Natural killer cell (primary cell): ENCODE measurements at regions of chr6 and their contacts with region 1.

Region 1: GRCh38 chr6:30616811-30617564 is at the start of gene PPP1R10:
- DNase-seq: peak; percentile 93 to 100
- ATAC-seq: peak; percentile 75 to 91 (median 80)
- H3K4me3 ChIP-seq: peak within 1 kb of the TSS; percentile 73
- H3K4me3 Mint-ChIP-seq: peak within 1 kb of the TSS; percentile 100
- H3K27ac ChIP-seq: peak within 1 kb of the TSS; percentile 99
- H3K27ac Mint-ChIP-seq: peak within 1 kb of the TSS; percentile 96 to 100
- H3K4me1 ChIP-seq: peaks cover 23% of the 10 kb centered on the region
- H3K4me1 Mint-ChIP-seq: peaks cover 57 to 64% of the 10 kb centered on the region in 2 donors
- H3K27me3 ChIP-seq: no peaks in the 10 kb centered on the region
- H3K27me3 Mint-ChIP-seq: peaks cover 0 to 5% of the 10 kb centered on the region in 2 donors
- CTCF ChIP-seq: no peak
- total RNA-seq, gene PPP1R10: 151 to 222 (median 174) TPM

Region 2: DNA sequence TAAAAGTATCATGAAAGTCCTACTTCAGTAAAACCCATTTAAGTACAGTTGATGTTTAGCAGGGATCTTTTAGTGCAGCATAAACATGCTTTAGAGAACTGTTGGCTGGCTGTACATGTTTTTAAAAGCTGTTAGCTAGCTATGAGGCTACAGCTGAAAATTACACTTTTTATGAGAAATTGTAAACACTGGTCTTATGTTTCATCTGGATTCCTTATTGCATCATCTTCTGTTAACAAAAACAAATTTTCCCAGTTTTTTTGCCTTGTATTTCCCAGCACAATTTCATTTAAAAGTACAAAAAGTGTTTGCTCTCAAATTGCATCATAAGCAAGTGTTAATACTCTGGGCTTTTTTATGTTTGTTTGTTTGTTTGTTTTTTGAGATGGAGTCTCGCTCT is 146.0 kb before region 1 on chr6:
- intact Hi-C with region 1: no loop called
- DNase-seq: no peak
- ATAC-seq: no peak
- H3K4me3 ChIP-seq: no peak overlapping the region
- H3K4me3 Mint-ChIP-seq: no peak overlapping the region
- H3K27ac ChIP-seq: no peak overlapping the region
- H3K27ac Mint-ChIP-seq: no peak overlapping the region
- H3K4me1 ChIP-seq: peaks cover 15% of the 10 kb centered on the region
- H3K4me1 Mint-ChIP-seq: peaks cover 12% of the 10 kb centered on the region in 2 donors
- H3K27me3 ChIP-seq: peaks cover 56% of the 10 kb centered on the region
- H3K27me3 Mint-ChIP-seq: peaks cover 59 to 82% of the 10 kb centered on the region in 2 donors
- CTCF ChIP-seq: no peak

Region 3: GRCh38 chr6:30483677-30484279 is 133.2 kb before region 1 on chr6:
- intact Hi-C with region 1: loop called (anchors 5 kb)
- DNase-seq: peak in 1 of 2 donors; percentile 79
- ATAC-seq: peak in 1 of 3 donors; percentile 27
- H3K4me3 ChIP-seq: no peak overlapping the region
- H3K4me3 Mint-ChIP-seq: no peak overlapping the region
- H3K27ac ChIP-seq: no peak overlapping the region
- H3K27ac Mint-ChIP-seq: no peak overlapping the region
- H3K4me1 ChIP-seq: peaks cover 25% of the 10 kb centered on the region
- H3K4me1 Mint-ChIP-seq: peaks cover 13 to 20% of the 10 kb centered on the region in 2 donors
- H3K27me3 ChIP-seq: peaks cover 35% of the 10 kb centered on the region
- H3K27me3 Mint-ChIP-seq: peaks cover 32 to 37% of the 10 kb centered on the region in 2 donors
- CTCF ChIP-seq: peak; percentile 76

Region 4: DNA sequence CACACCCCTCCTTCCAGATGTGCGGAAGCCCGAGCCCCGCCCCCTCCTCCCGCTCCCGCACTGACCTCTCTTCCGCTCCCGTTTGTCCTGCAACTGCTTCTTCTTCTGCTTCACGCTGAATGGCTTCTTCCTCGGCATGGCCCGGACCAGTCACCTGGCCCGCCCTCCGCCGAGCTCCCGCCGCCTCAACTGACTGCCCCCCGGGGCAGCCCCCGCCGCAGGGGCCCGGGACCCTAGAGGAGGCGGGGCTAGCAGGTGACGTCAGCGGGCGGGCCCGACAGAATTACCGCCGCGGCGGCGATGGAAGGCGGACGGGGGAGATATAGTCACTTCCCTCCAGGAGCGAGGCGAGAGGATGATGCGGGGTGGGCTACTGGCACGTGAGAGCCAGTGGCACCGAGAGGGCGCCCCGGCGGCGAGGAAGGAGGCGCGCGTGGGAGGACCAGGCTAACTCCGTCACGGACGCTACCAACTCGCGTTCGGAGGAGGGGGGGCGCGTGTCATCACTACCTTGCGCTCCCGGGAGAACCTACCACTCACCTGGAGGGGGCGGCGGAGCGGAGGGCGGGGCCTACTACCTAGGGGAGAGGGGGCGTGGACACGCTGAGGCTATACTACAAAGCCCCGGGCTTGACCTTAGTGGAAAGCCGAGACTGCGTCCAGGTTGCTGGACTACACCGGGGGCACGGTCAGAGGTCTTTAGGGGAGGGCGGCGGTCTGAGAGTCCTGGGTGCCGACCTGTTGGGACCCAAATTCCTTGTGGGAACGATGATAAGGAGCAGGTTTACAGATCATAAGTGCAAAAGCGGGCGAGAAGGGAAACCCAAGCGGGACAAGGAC is 60.7 kb before region 1 on chr6 and contains the start of gene GNL1:
- intact Hi-C with region 1: loop called (anchors 1 kb)
- DNase-seq: peak; percentile 97 to 99
- ATAC-seq: peak; percentile 79 to 93 (median 80)
- H3K4me3 ChIP-seq: peak within 1 kb of the TSS; percentile 64
- H3K4me3 Mint-ChIP-seq: peak within 1 kb of the TSS; percentile 98
- H3K27ac ChIP-seq: peak within 1 kb of the TSS; percentile 97
- H3K27ac Mint-ChIP-seq: peak within 1 kb of the TSS; percentile 98 to 100
- H3K4me1 ChIP-seq: peaks cover 24% of the 10 kb centered on the region
- H3K4me1 Mint-ChIP-seq: peaks cover 35 to 54% of the 10 kb centered on the region in 2 donors
- H3K27me3 ChIP-seq: no peaks in the 10 kb centered on the region
- H3K27me3 Mint-ChIP-seq: no peaks in the 10 kb centered on the region
- CTCF ChIP-seq: no peak
- total RNA-seq, gene GNL1: 137 to 208 (median 187) TPM

Region 5: GRCh38 chr6:30646458-30647241 is 29.7 kb after region 1 on chr6 and contains the start of gene C6orf136:
- intact Hi-C with region 1: loop called (anchors 2 kb)
- DNase-seq: peak; percentile 85 to 99
- ATAC-seq: peak; percentile 77 to 87 (median 80)
- H3K4me3 ChIP-seq: peak within 1 kb of the TSS; percentile 96
- H3K4me3 Mint-ChIP-seq: peak within 1 kb of the TSS; percentile 86
- H3K27ac ChIP-seq: peak within 1 kb of the TSS; percentile 98
- H3K27ac Mint-ChIP-seq: peak within 1 kb of the TSS; percentile 82 to 83
- H3K4me1 ChIP-seq: peaks cover 16% of the 10 kb centered on the region
- H3K4me1 Mint-ChIP-seq: peaks cover 15 to 24% of the 10 kb centered on the region in 2 donors
- H3K27me3 ChIP-seq: no peaks in the 10 kb centered on the region
- H3K27me3 Mint-ChIP-seq: no peaks in the 10 kb centered on the region
- CTCF ChIP-seq: no peak
- total RNA-seq, gene C6orf136: 39.4 to 51.4 (median 50.9) TPM

Region 6: GRCh38 chr6:30717042-30717844 is 100.3 kb after region 1 on chr6 and contains the start of gene MDC1:
- intact Hi-C with region 1: loop called (anchors 1 kb)
- DNase-seq: peak; percentile 97 to 100
- ATAC-seq: peak; percentile 72 to 88 (median 77)
- H3K4me3 ChIP-seq: peak within 1 kb of the TSS; percentile 68
- H3K4me3 Mint-ChIP-seq: peak within 1 kb of the TSS; percentile 98
- H3K27ac ChIP-seq: peak within 1 kb of the TSS; percentile 95
- H3K27ac Mint-ChIP-seq: peak within 1 kb of the TSS; percentile 97 to 100
- H3K4me1 ChIP-seq: peaks cover 39% of the 10 kb centered on the region
- H3K4me1 Mint-ChIP-seq: peaks cover 60 to 62% of the 10 kb centered on the region in 2 donors
- H3K27me3 ChIP-seq: no peaks in the 10 kb centered on the region
- H3K27me3 Mint-ChIP-seq: no peaks in the 10 kb centered on the region
- CTCF ChIP-seq: no peak
- total RNA-seq, gene MDC1: 61.2 to 77.0 (median 64.5) TPM

Region 7: GRCh38 chr6:31356946-31357466 is 740.0 kb after region 1 on chr6 and contains the start of gene HLA-B:
- intact Hi-C with region 1: loop called (anchors 10 kb)
- DNase-seq: peak; percentile 83 to 96
- ATAC-seq: peak; percentile 73 to 88 (median 81)
- H3K4me3 ChIP-seq: peak within 1 kb of the TSS; percentile 99
- H3K4me3 Mint-ChIP-seq: peak within 1 kb of the TSS; percentile 97
- H3K27ac ChIP-seq: peak within 1 kb of the TSS; percentile 100
- H3K27ac Mint-ChIP-seq: peak within 1 kb of the TSS; percentile 100
- H3K4me1 ChIP-seq: peaks cover 50% of the 10 kb centered on the region
- H3K4me1 Mint-ChIP-seq: peaks cover 61 to 68% of the 10 kb centered on the region in 2 donors
- H3K27me3 ChIP-seq: no peaks in the 10 kb centered on the region
- H3K27me3 Mint-ChIP-seq: peaks cover 6 to 15% of the 10 kb centered on the region in 2 donors
- CTCF ChIP-seq: no peak
- total RNA-seq, gene HLA-B: 9,586 to 11,061 (median 11,048) TPM